Left ventricle myocardium superior (tissue), 1 donor: ENCODE measurements at regions of chr13 and their contacts with region 1.

Region 1: GRCh38 chr13:77599351-77599750 is 63.8 kb downstream of the SCEL start:
- DNase-seq: no peak
- ATAC-seq: no peak

Region 2: GRCh38 chr13:77213644-77214043 is 385.7 kb before region 1 on chr13:
- intact Hi-C with region 1: no loop called
- DNase-seq: no peak
- ATAC-seq: no peak

Region 3: DNA sequence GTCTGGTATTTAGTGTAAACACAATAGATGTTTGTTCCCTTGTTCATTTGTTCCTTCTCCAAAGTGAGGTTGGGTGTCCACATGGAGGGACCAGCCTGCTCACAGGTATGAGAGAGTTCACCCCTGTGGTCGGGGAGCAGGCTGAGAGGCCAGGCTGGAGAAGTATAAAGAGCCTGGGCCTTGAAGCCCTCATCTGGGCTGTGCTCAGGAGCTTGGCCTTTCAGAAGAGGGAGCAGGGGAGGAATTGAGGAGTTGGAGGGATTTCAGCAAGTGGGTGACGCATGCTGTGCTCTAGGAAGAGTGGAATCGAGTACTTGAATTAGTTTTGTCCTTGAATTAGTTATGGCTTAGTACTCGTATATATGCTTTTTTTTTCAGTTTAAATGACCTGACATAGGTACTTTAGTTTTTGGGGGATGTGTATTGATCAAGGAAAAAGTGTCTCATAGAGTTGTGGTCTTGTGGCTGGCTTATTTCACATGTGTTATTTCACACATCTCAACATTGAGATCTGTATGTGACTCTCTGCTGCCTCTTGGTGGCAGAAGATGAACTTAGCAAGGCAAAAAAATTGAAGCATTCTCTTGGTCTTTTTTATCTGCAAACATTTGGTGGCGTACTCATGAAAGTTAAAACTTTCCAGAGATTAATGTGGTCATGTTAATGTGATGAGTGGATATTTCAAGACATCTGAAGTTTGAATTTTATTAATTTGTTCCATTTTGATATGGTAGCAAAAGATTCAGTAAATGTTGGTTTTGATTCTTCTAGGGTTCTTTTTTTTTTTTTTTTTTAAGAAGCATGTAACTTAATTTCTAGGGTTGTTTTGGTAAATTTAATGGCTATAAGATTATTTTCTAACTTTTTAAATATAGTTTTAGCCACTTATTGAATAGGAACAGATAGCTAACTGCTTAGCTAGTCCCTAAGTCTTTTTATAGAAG is 152.4 kb after region 1 on chr13:
- intact Hi-C with region 1: loop called (anchors 5 kb)
- DNase-seq: no peak
- ATAC-seq: peak; percentile 70